ENCODE measurements at regions of chr14 and their contacts with region 1.

Region 1: DNA sequence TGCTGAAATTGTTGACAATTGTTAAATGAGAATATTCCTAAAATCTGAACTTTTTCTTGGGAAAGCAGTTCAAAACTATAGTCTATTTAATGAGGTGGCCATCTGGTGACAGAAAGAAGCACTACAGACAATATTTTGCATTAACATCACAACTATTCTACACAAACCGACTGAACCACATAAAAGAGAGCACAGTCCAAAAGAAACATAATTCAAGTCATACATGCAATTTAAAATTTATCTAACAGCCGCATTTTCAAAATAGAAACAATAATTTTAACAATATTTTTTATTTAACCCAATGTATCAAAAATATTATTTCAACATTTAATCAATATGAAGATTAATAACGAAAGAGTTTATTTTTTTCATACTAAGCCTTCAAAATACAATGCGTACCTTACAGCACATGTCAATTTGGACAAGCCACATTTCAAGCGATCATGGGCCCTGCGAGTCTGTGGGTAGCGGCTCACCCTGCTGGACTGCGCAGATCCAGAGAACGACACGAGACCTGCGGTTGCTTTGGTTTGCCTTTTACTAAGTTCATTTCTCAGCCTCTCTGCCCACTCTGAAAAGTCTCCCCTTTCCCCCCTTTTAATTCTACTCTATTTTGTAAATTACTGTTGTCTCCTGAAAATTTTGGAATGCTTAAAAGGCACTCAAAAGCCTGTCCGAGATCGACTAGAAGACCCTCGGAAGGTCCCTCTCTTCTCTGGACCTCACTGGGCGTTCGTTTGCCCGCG is 947 bp upstream of the LRRC9 start:
- DNase-seq: no peak
- ATAC-seq: peak; percentile 74
- H3K4me3 ChIP-seq: peak overlapping the region; percentile 8 to 35; a peak in 3 of 4 replicates
- H3K27ac ChIP-seq: no peak overlapping the region
- H3K4me1 ChIP-seq: no peaks in the 10 kb centered on the region
- H3K27me3 ChIP-seq: peaks cover 6% of the 10 kb centered on the region; the same call in 1 of the 2 replicates
- CTCF ChIP-seq: peak; percentile 46; the same call in 1 of the 2 replicates

Region 2: GRCh38 chr14:59632381-59632780 is 286.6 kb before region 1 on chr14:
- CTCF ChIA-PET with region 1: no interaction called
- POLR2A ChIA-PET with region 1: no interaction called
- in situ Hi-C with region 1: no loop called
- intact Hi-C with region 1: loop called (anchors 5 kb)
- DNase-seq: no peak
- ATAC-seq: peak; percentile 60; the same call in 1 of the 2 replicates
- H3K4me3 ChIP-seq: no peak overlapping the region
- H3K27ac ChIP-seq: no peak overlapping the region
- H3K4me1 ChIP-seq: no peaks in the 10 kb centered on the region
- H3K27me3 ChIP-seq: peaks cover 16% of the 10 kb centered on the region
- CTCF ChIP-seq: peak; percentile 69

Region 3: DNA sequence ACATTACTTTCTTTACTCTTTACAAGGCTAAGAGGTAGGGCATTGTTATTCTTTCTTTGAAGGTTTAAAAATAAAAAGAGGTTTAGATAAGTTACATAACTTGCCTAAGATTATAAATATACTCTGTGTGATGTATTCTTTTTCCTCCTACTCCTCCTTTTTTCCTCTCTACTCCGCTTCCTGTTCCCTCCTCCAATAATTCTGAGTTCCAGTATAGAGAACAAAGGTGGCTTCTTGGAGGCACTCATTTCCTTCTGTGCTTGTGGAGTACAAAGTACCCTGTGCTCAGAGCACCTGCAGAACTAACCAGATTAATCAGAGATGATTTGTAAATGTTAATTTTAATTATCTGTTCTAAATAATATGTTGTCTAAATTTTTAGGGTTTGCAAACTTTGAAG is 12.2 kb after region 1 on chr14:
- CTCF ChIA-PET with region 1: no interaction called
- POLR2A ChIA-PET with region 1: no interaction called
- in situ Hi-C with region 1: no loop called
- intact Hi-C with region 1: no loop called
- DNase-seq: no peak
- ATAC-seq: no peak
- H3K4me3 ChIP-seq: no peak overlapping the region
- H3K27ac ChIP-seq: no peak overlapping the region
- H3K4me1 ChIP-seq: no peaks in the 10 kb centered on the region
- H3K27me3 ChIP-seq: no peaks in the 10 kb centered on the region
- CTCF ChIP-seq: no peak

Region 4: DNA sequence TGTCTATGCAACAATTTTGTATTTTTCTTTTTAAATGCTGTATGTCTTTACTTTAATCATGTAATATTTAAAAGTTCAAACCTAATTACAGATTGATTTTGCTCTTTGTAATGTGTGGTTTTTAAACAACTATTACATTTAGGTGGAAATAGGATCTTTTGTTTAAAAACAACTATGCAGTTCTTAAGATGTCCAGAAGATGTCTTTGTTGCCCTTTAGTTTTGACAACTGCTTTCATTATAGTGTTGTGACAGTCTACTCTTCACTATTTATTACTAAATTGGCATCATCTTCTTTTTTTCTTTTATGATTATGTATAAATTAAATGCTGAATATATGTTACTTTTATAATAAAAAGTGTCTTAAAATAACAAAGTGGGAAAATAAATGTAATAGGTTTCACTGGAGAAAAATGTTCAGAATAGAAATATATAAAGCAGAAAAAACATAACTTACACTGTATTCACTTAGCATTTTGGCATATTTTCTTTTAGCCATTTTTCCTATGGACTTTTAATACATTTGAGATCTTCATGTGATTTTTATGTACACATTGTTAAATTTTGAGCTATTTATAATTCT is 145.6 kb after region 1 on chr14:
- CTCF ChIA-PET with region 1: no interaction called
- POLR2A ChIA-PET with region 1: no interaction called
- in situ Hi-C with region 1: no loop called
- intact Hi-C with region 1: no loop called
- DNase-seq: peak; percentile 15
- ATAC-seq: no peak
- H3K4me3 ChIP-seq: no peak overlapping the region
- H3K27ac ChIP-seq: no peak overlapping the region
- H3K4me1 ChIP-seq: no peaks in the 10 kb centered on the region
- H3K27me3 ChIP-seq: no peaks in the 10 kb centered on the region
- CTCF ChIP-seq: no peak

Measured in Panc1 (cell line).